ENCODE measurements at regions of chr14 and their contacts with region 1.

Region 1: GRCh38 chr14:93939304-93940229 is 12.4 kb downstream of the FAM181A start:
- DNase-seq: peak; percentile 71
- H3K4me3 ChIP-seq: peak overlapping the region in 1 of 3 experiments; percentile 16
- H3K27ac ChIP-seq: no peak overlapping the region
- H3K4me1 ChIP-seq: peaks cover 54% of the 10 kb centered on the region
- H3K27me3 ChIP-seq: no peaks in the 10 kb centered on the region
- CTCF ChIP-seq: peak; percentile 28 to 52

Region 2: DNA sequence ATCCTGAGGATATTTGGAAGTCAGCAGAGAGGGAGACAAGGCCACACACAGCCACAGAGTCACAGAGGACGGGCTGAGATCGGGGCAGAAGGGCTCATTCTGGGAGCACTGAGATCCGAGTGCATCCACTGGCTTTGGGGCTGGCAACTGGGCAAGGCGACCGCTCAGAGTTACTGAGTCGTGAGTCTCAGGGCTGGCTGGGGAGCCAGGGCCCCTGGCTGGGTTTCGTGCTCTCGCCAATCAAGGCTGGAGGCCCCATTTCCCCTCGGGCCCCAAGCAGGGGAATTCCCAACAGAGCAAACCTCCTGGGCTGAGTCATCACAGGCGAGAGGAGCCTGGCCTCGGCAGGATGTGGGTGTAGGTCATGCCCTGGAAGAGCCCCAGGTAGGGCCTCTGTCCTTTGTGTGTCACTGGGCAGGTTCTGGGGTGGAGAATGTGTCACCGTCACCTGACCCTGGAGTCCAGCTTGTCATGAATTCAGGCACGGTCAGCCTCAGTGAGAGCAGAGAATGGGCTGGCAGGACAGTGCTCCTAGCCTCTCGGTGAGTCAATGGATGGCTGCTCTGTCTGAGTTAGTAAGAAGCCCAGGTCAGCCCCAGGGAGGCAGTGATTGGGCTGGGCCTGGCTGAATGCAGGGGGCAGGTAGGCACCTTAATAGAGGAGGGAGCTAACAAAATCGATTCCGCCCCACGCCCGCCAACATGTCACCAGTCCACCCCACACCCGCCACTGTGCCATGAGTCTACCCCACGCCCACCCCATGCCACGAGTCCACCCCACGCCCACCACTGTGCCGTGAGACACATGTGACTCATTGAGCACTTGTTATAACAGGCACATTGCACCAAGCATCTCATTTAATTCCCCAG is 19.9 kb after region 1 on chr14:
- CTCF ChIA-PET with region 1: no interaction called
- dilution Hi-C with region 1: no loop called
- in situ Hi-C with region 1: no loop called
- intact Hi-C with region 1: loop called (anchors 1 kb)
- DNase-seq: peak; percentile 100
- H3K4me3 ChIP-seq: no peak overlapping the region
- H3K27ac ChIP-seq: peak overlapping the region; percentile 87
- H3K4me1 ChIP-seq: peaks cover 41% of the 10 kb centered on the region
- H3K27me3 ChIP-seq: no peaks in the 10 kb centered on the region
- CTCF ChIP-seq: no peak

Region 3: DNA sequence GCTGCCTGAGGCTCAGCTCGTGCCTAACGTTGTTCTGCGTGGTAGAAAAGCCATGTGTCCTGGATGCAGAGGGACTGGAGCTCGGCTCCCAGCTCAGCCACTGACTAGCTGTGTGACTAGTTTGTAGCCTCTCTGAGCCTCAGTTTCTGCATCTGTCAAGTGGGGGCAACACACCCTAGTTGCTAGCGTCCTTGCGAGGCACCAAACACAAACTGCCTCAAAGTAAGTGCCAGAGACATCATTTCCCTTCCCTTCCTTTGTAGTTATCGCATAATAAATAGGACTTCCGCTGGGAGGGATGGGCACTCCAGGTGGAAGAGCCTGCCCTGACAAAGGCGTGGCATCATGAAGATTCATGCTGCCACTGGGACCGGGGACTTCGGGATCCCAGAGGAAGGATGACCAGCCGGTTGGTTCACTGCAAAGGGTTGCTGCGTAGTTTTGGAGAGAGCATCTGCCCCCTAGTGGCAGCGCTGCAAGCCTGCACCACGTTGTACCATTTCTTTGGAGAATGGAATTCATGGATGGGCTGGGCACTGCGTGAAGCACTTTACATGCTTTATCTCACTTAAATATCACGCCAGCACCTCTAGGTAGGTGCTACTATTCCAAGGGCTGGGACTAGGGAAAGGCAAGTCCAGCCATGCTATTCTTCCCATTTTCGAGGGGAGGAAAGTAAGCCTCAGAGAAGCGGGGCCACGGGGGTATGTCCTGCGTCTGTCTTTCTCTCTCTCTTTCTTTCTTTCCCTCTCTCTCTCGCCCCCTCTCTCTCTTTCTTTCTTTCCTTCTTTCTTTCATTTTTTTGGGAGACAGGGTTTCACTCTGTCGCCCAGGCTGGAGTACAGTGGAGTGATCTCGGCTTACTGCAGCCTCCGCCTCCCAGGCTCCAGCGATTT is 62.2 kb after region 1 on chr14:
- CTCF ChIA-PET with region 1: interaction called, 12 read pairs
- dilution Hi-C with region 1: no loop called
- in situ Hi-C with region 1: loop called in 1 of 2 experiments (anchors 5 kb)
- intact Hi-C with region 1: loop called (anchors 1 kb)
- DNase-seq: peak; percentile 65
- H3K4me3 ChIP-seq: no peak overlapping the region
- H3K27ac ChIP-seq: no peak overlapping the region
- H3K4me1 ChIP-seq: peaks cover 17% of the 10 kb centered on the region
- H3K27me3 ChIP-seq: no peaks in the 10 kb centered on the region
- CTCF ChIP-seq: peak; percentile 97 to 100

Region 4: DNA sequence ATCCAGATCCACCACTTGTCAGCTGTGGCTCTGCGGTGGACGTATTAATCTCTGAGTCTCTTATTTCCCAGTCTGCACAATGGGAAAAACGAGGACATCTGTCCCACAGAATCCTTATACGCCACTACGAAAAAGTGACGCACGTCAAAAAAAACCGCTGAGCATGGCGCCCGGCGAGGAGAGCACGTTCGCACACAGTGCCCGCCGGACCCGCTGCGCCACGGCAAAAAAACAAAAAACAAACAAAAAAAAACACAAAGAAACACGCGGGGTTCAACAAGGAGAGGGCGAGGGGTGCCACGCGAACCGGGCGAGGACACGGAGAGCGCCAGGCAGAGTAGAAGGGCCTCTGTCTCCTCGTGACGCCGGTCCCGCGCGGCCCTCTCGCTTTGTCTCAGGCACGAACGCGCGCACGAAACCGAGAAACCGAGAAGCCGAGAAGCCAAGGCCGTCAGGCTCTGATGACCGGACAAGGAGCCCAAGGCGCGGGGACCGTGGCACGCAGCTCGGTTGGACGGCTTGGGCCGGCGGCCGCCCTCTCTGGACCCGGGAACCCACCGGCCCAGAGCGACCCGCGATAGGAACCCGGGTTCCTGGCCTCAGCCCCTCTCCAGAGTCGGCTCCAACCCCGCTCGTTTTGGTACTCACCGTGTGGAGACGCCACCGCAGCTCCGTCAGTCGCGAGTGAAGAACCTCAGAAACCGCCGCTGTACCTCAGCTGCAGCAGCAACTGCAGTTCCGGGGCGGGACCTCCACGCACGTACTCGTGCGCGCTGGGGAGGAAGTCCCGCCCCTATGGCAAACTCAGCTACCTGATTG is 141.1 kb after region 1 on chr14 and contains the start of gene DDX24:
- CTCF ChIA-PET with region 1: no interaction called
- dilution Hi-C with region 1: no loop called
- in situ Hi-C with region 1: no loop called
- intact Hi-C with region 1: loop called (anchors 2 kb)
- DNase-seq: peak; percentile 95
- H3K4me3 ChIP-seq: peak within 1 kb of the TSS; percentile 93 to 99 (median 96)
- H3K27ac ChIP-seq: peak within 1 kb of the TSS; percentile 95
- H3K4me1 ChIP-seq: peaks cover 18% of the 10 kb centered on the region
- H3K27me3 ChIP-seq: no peaks in the 10 kb centered on the region
- CTCF ChIP-seq: no peak
- total RNA-seq, gene DDX24: 94.7 to 156 TPM

Measured in mammary epithelial cell (primary cell).